GM10248 (cell line): ENCODE measurements at regions of chr19 and their contacts with region 1.

Region 1: GRCh38 chr19:38683393-38684080 is 36.1 kb downstream of the ACTN4 start:
- DNase-seq: no peak
- CTCF ChIP-seq: no peak

Region 2: DNA sequence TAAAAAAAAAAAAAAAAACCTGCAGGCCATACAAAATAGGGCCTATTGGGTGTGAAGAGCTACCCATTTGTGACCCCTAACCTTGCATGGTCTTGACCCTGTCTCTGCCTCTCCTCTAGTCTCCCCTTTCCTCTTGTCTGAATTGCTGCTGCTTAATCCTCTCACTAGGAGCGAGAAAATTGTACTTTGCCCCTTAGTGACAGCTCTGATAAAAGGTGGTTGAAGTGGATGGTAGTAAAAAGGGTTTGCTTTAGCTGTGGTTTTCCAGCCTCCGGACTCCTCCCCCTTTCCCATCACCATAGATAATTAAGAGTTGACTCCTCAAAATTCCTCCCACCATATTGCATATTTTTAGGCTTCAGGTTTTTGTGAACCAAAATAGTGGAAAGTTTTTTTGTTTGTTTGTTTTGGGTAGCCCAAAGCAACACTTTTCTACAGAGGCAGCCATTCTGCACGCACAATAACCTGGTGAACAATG is 12.6 kb before region 1 on chr19:
- CTCF ChIA-PET with region 1: interaction called, 19 read pairs
- POLR2A ChIA-PET with region 1: no interaction called
- DNase-seq: no peak
- CTCF ChIP-seq: no peak

Region 3: DNA sequence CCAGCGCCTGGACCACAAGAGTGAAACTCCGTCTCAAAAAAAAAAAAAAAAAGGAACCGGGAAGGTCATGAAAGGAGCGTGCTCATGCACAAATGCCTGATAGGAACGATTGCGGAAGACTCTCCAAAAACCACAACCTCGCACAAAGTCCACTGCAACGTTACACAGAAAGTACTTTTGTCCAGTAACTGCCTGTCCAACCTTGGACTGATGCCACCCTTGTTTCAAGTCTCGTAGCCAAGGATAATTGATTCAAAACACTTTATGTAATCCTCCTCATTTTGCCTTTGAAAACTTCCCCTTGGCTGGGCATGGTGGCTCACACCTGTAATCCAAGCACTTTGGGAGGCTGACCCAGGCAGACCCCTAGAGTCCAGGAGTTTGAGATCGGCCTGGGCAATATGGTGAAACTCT is 76.1 kb after region 1 on chr19:
- CTCF ChIA-PET with region 1: no interaction called
- POLR2A ChIA-PET with region 1: no interaction called
- DNase-seq: no peak
- CTCF ChIP-seq: no peak